ENCODE measurements at regions of chr5 and their contacts with region 1.

Region 1: DNA sequence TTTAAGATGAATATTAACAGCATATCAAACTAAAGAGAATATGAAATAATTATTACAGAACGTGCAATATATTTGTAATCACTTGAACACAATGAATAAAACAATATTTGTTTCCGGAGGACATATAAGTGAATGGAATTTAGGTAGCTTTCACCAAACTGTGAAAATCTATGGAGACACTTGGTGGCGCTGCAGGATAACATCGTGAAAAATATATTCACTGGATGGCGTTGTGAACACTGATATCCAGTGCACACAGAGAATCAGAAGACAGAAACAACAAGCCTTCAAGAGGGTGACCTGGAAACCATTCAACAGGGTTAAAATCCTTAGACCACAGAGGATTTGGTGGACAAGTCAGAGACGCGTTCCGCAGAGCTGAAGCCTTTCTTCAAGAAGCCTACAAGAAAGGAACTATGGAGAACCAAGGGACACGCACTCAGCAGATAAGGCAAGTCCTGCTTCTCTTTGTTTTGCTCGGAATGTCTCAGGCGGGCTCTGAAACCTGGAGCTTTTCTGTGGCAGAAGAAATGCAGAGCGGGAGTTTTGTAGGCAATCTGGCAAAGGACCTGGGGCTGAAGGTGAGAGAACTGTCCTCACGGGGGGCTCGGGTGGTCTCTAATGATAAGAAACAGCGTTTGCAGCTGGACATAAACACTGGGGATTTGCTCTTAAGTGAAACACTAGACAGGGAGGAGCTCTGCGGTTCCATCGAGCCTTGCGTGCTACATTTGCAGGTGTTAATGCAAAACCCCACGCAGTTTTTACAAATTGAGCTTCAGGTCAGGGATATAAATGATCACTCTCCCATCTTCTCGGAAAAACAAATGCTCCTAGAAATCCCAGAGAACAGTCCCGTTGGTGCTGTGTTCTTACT is at the start of gene PCDHB11:
- DNase-seq: peak; percentile 6 to 39
- ATAC-seq: peak; percentile 68 to 78; a peak in 5 of 6 replicates
- H3K4me3 ChIP-seq: peak within 1 kb of the TSS; percentile 30; the same call in 2 of the 3 replicates
- H3K27ac ChIP-seq: no peak within 1 kb of the TSS
- H3K4me1 ChIP-seq: no peaks in the 10 kb centered on the region
- CTCF ChIP-seq: peak; percentile 38
- EP300 ChIP-seq: no peak
- POLR2A ChIP-seq: no peak
- RAD21 ChIP-seq: peak; percentile 31 to 46; a peak in 4 of 5 replicates
- polyA plus RNA-seq, gene PCDHB11: 0.21 and 0.22 TPM in 2 replicates

Region 2: DNA sequence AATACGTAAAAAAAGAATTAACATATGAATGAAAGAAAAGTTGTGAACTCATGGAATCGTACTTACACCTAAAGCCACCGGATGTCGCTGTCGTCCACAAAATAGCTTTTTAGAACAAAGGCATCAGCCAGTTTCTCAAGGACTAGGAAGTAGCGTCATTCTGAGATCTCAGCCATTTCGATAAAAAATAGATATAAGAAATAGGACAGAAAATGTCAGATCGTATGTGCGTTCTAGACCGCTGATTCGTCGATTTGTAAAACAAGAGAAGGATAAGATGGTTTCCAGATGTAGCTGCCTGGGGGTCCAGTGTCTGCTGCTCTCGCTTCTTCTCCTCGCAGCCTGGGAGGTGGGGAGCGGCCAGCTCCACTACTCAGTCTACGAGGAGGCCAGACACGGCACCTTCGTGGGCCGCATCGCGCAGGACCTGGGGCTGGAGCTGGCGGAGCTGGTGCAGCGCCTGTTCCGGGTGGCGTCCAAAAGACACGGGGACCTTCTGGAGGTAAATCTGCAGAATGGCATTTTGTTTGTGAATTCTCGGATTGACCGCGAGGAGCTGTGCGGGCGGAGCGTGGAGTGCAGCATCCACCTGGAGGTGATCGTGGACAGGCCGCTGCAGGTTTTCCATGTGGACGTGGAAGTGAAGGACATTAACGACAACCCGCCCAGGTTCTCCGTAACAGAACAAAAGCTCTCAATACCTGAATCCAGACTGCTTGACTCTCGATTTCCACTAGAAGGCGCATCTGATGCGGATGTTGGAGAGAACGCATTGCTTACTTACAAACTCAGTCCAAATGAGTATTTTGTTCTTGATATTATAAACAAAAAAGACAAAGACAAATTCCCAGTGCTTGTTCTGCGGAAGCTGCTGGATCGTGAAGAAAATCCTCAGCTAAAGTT is 343.6 kb before region 1 on chr5 and contains the start of gene PCDHA10:
- CTCF ChIA-PET with region 1: no interaction called
- POLR2A ChIA-PET with region 1: no interaction called
- DNase-seq: peak in 1 of 2 experiments; percentile 18
- ATAC-seq: no peak
- H3K4me3 ChIP-seq: no peak within 1 kb of the TSS
- H3K27ac ChIP-seq: no peak within 1 kb of the TSS
- H3K4me1 ChIP-seq: no peaks in the 10 kb centered on the region
- CTCF ChIP-seq: no peak
- EP300 ChIP-seq: no peak
- POLR2A ChIP-seq: no peak
- RAD21 ChIP-seq: peak in 1 of 2 experiments; percentile 17; a peak in 1 of 5 replicates
- polyA plus RNA-seq, gene PCDHA10: 0.06 and 0.12 TPM in 2 replicates

Region 3: GRCh38 chr5:141186897-141187512 is 12.6 kb before region 1 on chr5 and contains the start of gene PCDHB9:
- CTCF ChIA-PET with region 1: interaction called, 10 read pairs
- POLR2A ChIA-PET with region 1: no interaction called
- DNase-seq: peak in 1 of 2 experiments; percentile 15
- ATAC-seq: no peak
- H3K4me3 ChIP-seq: no peak within 1 kb of the TSS
- H3K27ac ChIP-seq: no peak within 1 kb of the TSS
- H3K4me1 ChIP-seq: no peaks in the 10 kb centered on the region
- CTCF ChIP-seq: no peak; the same call in 2 of the 3 replicates
- EP300 ChIP-seq: no peak
- POLR2A ChIP-seq: no peak
- RAD21 ChIP-seq: peak in 1 of 2 experiments; percentile 13; a peak in 1 of 5 replicates
- polyA plus RNA-seq, gene PCDHB9: 0.12 TPM in 1 of 2 replicates, not detected in the other

Region 4: GRCh38 chr5:141269195-141269594 is 69.6 kb after region 1 on chr5:
- CTCF ChIA-PET with region 1: no interaction called
- POLR2A ChIA-PET with region 1: no interaction called
- DNase-seq: no peak
- ATAC-seq: no peak
- H3K4me3 ChIP-seq: no peak overlapping the region
- H3K27ac ChIP-seq: no peak overlapping the region
- H3K4me1 ChIP-seq: no peaks in the 10 kb centered on the region
- CTCF ChIP-seq: no peak
- EP300 ChIP-seq: no peak
- POLR2A ChIP-seq: no peak
- RAD21 ChIP-seq: no peak